GM12878 (cell line): ENCODE measurements at regions of chr6 and their contacts with region 1.

Region 1: DNA sequence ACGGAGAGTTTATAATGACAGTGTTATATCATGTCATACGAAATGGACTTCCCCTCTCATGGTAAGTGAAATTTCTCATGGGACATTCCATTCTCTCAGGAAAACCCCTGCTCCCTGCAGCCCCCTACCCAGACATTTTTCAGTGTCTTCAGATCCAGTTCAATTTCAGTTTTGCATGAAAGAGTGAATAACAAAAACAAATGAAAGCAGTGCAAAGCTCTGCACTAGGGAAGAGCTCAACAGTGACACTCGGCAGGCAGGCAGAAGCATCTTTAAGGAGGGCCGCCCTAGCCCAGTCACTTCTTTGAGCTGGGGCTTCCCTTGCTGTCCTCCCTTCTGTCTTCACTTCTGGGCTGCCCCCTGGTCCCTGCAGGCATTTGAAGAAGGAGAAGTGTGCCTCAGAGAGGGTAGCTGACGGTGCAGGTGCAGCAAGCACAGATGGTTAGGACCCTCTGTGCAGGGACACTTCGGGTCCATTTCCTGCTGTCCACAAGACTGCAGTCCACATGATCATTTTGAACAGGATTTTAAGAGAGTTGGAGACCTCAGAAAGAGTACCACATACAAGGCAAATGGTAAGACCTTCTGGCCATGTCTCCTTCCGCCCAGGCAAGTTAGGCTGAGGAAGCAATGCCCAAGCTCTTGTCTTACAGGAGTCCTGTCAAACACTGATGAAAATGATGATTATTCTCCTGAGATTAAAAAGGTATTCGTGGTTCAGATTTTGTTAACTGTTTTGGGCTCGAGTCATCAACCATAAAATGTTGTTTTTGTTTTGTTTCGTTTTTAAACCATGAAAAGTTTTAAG is 5.4 kb upstream of the DUSP22 start:
- DNase-seq: no peak
- ATAC-seq: peak; percentile 48
- H3K4me3 ChIP-seq: peak overlapping the region; percentile 2; the same call in 1 of the 2 replicates
- H3K27ac ChIP-seq: peak overlapping the region; percentile 53
- H3K4me1 ChIP-seq: peaks cover 54% of the 10 kb centered on the region
- H3K27me3 ChIP-seq: no peaks in the 10 kb centered on the region
- CTCF ChIP-seq: no peak
- EP300 ChIP-seq: 0 out of 4 replicates have a peak, but pooled peaks have one; percentile 42 to 61
- POLR2A ChIP-seq: no peak
- RAD21 ChIP-seq: 0 out of 2 replicates have a peak, but pooled peaks have one; percentile 7

Region 2: DNA sequence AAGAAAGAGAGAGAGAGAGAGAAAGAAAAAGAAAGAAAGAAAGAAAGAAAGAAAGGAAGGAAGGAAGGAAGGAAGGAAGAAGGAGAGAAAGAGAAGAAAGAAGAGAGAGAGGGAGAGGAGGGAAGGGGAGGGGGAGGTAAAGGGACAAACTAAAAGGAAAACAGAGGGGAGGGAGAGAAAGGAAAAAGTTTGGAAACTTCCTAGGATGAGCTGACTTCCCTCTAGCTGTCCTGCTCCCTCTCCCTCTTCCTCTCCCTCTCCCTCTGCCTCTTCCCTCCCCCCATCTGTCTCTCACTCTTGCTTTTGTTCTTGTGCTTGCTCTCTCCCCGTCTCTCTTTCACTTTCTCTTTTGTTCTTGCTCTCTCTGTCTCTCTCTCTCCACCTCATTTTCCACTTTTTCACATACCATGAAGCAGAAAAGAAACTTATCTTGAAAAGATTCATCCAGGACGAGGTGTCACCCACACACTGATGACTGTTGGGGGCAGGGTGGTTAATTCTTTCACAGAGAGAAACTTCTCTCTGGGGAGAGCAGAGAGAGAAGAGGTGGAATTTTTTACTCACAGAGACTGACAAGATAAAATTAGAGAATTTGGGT is 51.0 kb before region 1 on chr6:
- CTCF ChIA-PET with region 1: interaction called, 9 read pairs
- POLR2A ChIA-PET with region 1: interaction called, 39 read pairs
- RAD21 ChIA-PET with region 1: interaction called, 25 read pairs
- SMC1A ChIA-PET with region 1: interaction called, 150 read pairs
- in situ Hi-C with region 1: no loop called
- intact Hi-C with region 1: loop called (anchors 1 kb)
- DNase-seq: peak; percentile 85
- ATAC-seq: peak; percentile 78
- H3K4me3 ChIP-seq: peak overlapping the region; percentile 16; the same call in 1 of the 2 replicates
- H3K27ac ChIP-seq: peak overlapping the region; percentile 87
- H3K4me1 ChIP-seq: peaks cover 51% of the 10 kb centered on the region
- H3K27me3 ChIP-seq: no peaks in the 10 kb centered on the region
- CTCF ChIP-seq: no peak
- EP300 ChIP-seq: peak in 1 of 2 experiments; percentile 73; a peak in 2 of 4 replicates
- POLR2A ChIP-seq: no peak
- RAD21 ChIP-seq: peak; percentile 37; the same call in 1 of the 2 replicates

Region 3: GRCh38 chr6:273551-274058 is 13.3 kb before region 1 on chr6:
- CTCF ChIA-PET with region 1: interaction called, 11 read pairs
- POLR2A ChIA-PET with region 1: interaction called, 6 read pairs
- RAD21 ChIA-PET with region 1: interaction called, 5 read pairs
- SMC1A ChIA-PET with region 1: interaction called, 34 read pairs
- in situ Hi-C with region 1: no loop called
- intact Hi-C with region 1: no loop called
- DNase-seq: no peak
- ATAC-seq: no peak
- H3K4me3 ChIP-seq: no peak overlapping the region
- H3K27ac ChIP-seq: no peak overlapping the region
- H3K4me1 ChIP-seq: peaks cover 19% of the 10 kb centered on the region
- H3K27me3 ChIP-seq: no peaks in the 10 kb centered on the region
- CTCF ChIP-seq: no peak
- EP300 ChIP-seq: no peak
- POLR2A ChIP-seq: no peak
- RAD21 ChIP-seq: no peak

Region 4: GRCh38 chr6:298233-299103 is 11.6 kb after region 1 on chr6:
- CTCF ChIA-PET with region 1: interaction called, 6 read pairs
- POLR2A ChIA-PET with region 1: interaction called, 10 read pairs
- RAD21 ChIA-PET with region 1: interaction called, 23 read pairs
- SMC1A ChIA-PET with region 1: interaction called, 22 read pairs
- in situ Hi-C with region 1: no loop called
- intact Hi-C with region 1: no loop called
- DNase-seq: no peak
- ATAC-seq: peak; percentile 32
- H3K4me3 ChIP-seq: peak overlapping the region; percentile 63
- H3K27ac ChIP-seq: peak overlapping the region; percentile 100
- H3K4me1 ChIP-seq: peaks cover 66% of the 10 kb centered on the region
- H3K27me3 ChIP-seq: no peaks in the 10 kb centered on the region
- CTCF ChIP-seq: no peak
- EP300 ChIP-seq: no peak
- POLR2A ChIP-seq: no peak
- RAD21 ChIP-seq: no peak